Ascending aorta (tissue), 2 donors: ENCODE measurements at regions of chr17 and their contacts with region 1.

Region 1: GRCh38 chr17:38967290-38967738 is at the start of gene FBXO47:
- DNase-seq: peak; percentile 80 to 94
- H3K4me3 ChIP-seq: peak within 1 kb of the TSS in 1 of 2 donors; percentile 47
- H3K27ac ChIP-seq: peak within 1 kb of the TSS; percentile 46 to 56
- H3K4me1 ChIP-seq: peaks cover 0 to 3% of the 10 kb centered on the region in 2 donors
- H3K27me3 ChIP-seq: no peaks in the 10 kb centered on the region
- CTCF ChIP-seq: peak in 1 of 3 experiments; percentile 21
- total RNA-seq, gene FBXO47: not detected

Region 2: DNA sequence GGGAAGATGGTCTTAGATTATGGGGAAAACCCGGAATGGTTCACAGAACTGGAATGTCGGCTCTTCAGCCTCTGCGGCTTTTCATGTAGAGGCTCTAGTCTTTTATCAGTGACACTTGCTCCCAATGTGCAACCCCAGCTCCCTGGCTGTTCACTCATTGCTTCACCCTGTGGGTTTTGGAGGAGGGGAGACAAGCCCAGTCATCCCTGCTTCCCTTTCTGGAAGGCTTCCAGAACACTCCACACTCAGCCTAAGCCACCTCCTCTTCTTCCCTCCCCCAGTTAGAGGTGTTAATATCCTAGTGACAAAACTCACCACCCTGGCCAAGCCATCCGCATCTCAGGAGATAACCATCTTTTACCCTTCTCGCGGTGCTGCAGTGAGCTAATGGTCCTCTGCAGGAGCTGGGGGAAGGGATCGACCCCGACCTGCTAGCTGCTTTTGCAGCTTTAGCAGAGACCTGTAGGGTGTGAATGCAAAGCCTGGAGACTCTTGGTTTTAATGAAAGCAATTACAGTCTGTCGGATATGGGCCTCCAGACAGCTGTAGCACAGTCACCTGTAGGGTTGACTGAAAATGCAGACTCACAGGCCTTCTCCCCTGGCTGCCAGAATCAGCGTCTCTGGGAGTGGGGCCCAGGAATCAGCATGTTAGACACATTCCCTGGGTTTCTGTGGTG is 66.2 kb before region 1 on chr17:
- intact Hi-C with region 1: loop called (anchors 10 kb)
- DNase-seq: peak; percentile 36 to 81
- H3K4me3 ChIP-seq: peak overlapping the region in 1 of 2 donors; percentile 6
- H3K27ac ChIP-seq: peak overlapping the region; percentile 43 to 56
- H3K4me1 ChIP-seq: peaks cover 21 to 54% of the 10 kb centered on the region in 2 donors
- H3K27me3 ChIP-seq: no peaks in the 10 kb centered on the region
- CTCF ChIP-seq: no peak

Region 3: GRCh38 chr17:38982858-38983746 is 15.8 kb after region 1 on chr17:
- intact Hi-C with region 1: no loop called
- DNase-seq: peak in 1 of 2 donors; percentile 71
- H3K4me3 ChIP-seq: no peak overlapping the region
- H3K27ac ChIP-seq: no peak overlapping the region
- H3K4me1 ChIP-seq: peaks cover 0 to 5% of the 10 kb centered on the region in 2 donors
- H3K27me3 ChIP-seq: no peaks in the 10 kb centered on the region
- CTCF ChIP-seq: peak; percentile 70 to 79 (median 73)